BJ (cell line): ENCODE measurements at regions of chr10 and their contacts with region 1.

Region 1: GRCh38 chr10:70461215-70461986 is 17.2 kb upstream of the PALD1 start:
- DNase-seq: no peak
- H3K4me3 ChIP-seq: no peak overlapping the region
- H3K27me3 ChIP-seq: peaks cover 6% of the 10 kb centered on the region; the same call in 1 of the 2 replicates
- CTCF ChIP-seq: peak; percentile 88

Region 2: DNA sequence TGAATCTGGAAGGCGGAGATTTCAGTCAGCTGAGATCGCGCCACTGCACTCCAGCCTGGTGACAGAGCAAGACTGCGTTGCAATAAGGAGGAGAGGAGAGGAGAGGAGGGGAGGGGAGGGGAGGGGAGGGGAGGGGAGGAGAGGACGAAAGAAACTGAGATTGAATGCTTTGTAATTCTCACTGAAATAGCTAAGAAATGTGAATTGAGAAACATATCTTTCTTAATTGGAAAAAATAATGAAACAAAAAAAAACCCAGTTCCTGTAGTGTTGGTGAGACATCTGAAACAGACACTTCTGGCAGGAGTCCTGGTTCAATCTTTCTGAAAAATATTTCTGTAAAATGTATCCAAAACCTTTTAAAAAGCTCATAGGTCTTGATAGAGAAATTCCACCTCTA is 254.6 kb before region 1 on chr10:
- CTCF ChIA-PET with region 1: no interaction called
- POLR2A ChIA-PET with region 1: no interaction called
- DNase-seq: no peak
- H3K4me3 ChIP-seq: no peak overlapping the region
- H3K27me3 ChIP-seq: no peaks in the 10 kb centered on the region
- CTCF ChIP-seq: no peak

Region 3: DNA sequence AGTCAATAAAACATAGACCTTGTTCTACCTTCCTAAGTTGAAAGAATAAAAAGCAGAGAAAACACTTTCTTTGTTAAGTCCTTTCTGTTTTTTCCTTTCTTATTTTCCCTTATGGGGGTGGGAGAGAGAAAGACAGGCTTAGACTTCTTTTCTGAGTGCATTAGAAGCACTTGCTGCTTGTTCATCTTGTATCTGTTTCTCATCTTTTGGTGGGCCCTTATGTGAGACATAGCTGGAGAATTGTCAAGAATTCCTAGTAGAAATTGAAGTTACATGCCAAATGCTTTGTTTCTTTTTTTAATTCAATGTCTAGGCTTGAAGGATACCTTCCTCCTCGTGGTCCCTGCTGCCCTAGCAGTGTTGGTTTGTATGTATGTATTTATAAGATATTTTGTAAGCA is 50.8 kb before region 1 on chr10:
- CTCF ChIA-PET with region 1: no interaction called
- POLR2A ChIA-PET with region 1: no interaction called
- DNase-seq: no peak
- H3K4me3 ChIP-seq: no peak overlapping the region
- H3K27me3 ChIP-seq: no peaks in the 10 kb centered on the region
- CTCF ChIP-seq: no peak

Region 4: DNA sequence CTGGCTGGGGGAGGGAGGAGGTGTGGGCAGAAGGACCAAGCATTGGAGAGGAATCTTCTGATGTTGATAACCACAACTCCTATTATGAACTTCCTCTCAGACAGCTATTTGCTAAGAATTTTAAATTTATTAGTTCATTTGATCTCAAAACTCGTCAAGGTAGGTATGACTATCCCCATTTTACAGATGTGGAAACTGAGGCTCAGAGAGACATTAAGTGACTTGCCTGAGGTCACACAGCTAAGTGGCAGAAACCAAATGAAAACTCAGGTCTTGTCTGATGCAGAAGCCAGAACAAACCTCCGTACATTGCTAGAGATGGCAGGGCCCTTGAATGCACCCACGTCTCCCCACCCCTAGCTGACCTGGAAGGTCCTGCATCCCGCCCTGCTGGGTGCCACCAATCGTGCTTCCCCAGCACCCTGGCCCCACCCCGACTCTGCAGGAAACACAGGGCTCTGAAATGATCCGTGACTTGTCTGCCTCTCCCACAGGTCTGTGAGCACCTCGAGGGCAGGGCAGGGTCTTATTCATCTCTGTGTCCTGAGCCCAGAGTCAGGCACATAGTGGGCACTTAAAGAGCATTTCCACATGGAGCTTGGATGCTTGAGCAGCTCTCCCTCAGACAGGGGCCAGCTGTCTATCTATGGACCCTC is 11.5 kb after region 1 on chr10:
- CTCF ChIA-PET with region 1: interaction called, 18 read pairs
- POLR2A ChIA-PET with region 1: no interaction called
- DNase-seq: no peak
- H3K4me3 ChIP-seq: no peak overlapping the region
- H3K27me3 ChIP-seq: peaks cover 34% of the 10 kb centered on the region
- CTCF ChIP-seq: no peak

Region 5: DNA sequence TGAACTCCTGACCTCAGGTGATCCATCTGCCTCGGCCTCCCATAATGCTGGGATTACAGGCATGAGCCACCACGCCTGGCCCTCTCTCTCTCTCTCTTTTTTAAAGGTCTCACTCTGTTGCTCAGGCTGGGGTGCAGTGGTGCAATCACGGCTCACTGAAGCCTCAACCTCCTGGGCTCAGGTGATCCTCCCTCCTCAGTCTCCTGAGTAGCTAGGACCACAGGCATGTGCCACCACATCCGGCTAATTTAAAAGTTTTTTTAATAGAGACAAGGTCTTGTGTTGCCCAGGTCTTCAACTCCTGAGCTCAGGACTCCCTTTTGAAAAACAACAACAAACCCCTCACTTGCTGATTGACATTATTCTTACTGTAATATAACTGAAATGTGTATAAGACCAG is 28.7 kb after region 1 on chr10:
- CTCF ChIA-PET with region 1: interaction called, 10 read pairs
- POLR2A ChIA-PET with region 1: no interaction called
- DNase-seq: no peak
- H3K4me3 ChIP-seq: no peak overlapping the region
- H3K27me3 ChIP-seq: peaks cover 1% of the 10 kb centered on the region
- CTCF ChIP-seq: no peak

Region 6: GRCh38 chr10:70540089-70540788 is 78.8 kb after region 1 on chr10:
- CTCF ChIA-PET with region 1: interaction called, 123 read pairs
- POLR2A ChIA-PET with region 1: no interaction called
- DNase-seq: no peak
- H3K4me3 ChIP-seq: no peak overlapping the region
- H3K27me3 ChIP-seq: no peaks in the 10 kb centered on the region; the same call in 1 of the 2 replicates
- CTCF ChIP-seq: peak; percentile 78

Region 7: GRCh38 chr10:70679498-70679897 is 218.1 kb after region 1 on chr10:
- CTCF ChIA-PET with region 1: no interaction called
- POLR2A ChIA-PET with region 1: no interaction called
- DNase-seq: peak; percentile 81
- H3K4me3 ChIP-seq: no peak overlapping the region
- H3K27me3 ChIP-seq: no peaks in the 10 kb centered on the region; the same call in 1 of the 2 replicates
- CTCF ChIP-seq: no peak

Region 8: GRCh38 chr10:70758757-70759514 is 297.5 kb after region 1 on chr10:
- CTCF ChIA-PET with region 1: interaction called, 11 read pairs
- POLR2A ChIA-PET with region 1: no interaction called
- DNase-seq: no peak
- H3K4me3 ChIP-seq: no peak overlapping the region
- H3K27me3 ChIP-seq: no peaks in the 10 kb centered on the region; the same call in 1 of the 2 replicates
- CTCF ChIP-seq: peak; percentile 82